ENCODE measurements at regions of chr12 and their contacts with region 1.

Region 1: GRCh38 chr12:132986001-132986912 is at the start of gene ZNF26:
- DNase-seq: peak; percentile 90
- H3K4me3 Mint-ChIP-seq: peak within 1 kb of the TSS; percentile 91
- H3K27ac Mint-ChIP-seq: peak within 1 kb of the TSS; percentile 90
- H3K4me1 Mint-ChIP-seq: peaks cover 31% of the 10 kb centered on the region
- H3K27me3 Mint-ChIP-seq: no peaks in the 10 kb centered on the region
- total RNA-seq, gene ZNF26: 15.2 to 15.5 TPM

Region 2: DNA sequence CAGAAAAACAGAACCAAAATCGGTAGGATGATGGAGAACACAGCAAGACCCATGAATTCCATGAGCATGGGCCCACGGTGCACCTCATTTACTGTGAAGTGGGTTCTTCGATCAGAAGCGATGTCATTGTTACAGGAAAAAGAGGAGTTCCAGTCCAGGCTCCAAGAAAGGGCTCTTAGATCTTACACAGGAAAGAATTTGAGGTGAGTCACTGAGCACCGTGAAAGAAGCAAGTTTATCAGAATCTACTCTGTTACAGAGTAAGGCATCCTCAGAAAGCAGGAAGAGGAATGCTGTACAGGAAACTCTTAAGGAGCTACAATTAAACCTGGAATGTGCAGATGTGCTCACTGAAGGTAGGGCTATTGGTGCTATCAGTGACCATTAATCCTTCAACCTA is 87.2 kb before region 1 on chr12:
- CTCF ChIA-PET with region 1: no interaction called
- POLR2A ChIA-PET with region 1: no interaction called
- DNase-seq: no peak
- H3K4me3 Mint-ChIP-seq: no peak overlapping the region
- H3K27ac Mint-ChIP-seq: no peak overlapping the region
- H3K4me1 Mint-ChIP-seq: no peaks in the 10 kb centered on the region
- H3K27me3 Mint-ChIP-seq: no peaks in the 10 kb centered on the region

Region 3: GRCh38 chr12:132956011-132956788 is 30.1 kb before region 1 on chr12 and contains the start of gene ZNF605:
- CTCF ChIA-PET with region 1: no interaction called
- POLR2A ChIA-PET with region 1: interaction called, 13 read pairs
- DNase-seq: peak; percentile 88
- H3K4me3 Mint-ChIP-seq: peak within 1 kb of the TSS; percentile 96
- H3K27ac Mint-ChIP-seq: peak within 1 kb of the TSS; percentile 92
- H3K4me1 Mint-ChIP-seq: peaks cover 19% of the 10 kb centered on the region
- H3K27me3 Mint-ChIP-seq: no peaks in the 10 kb centered on the region
- total RNA-seq, gene ZNF605: 7.2 to 7.9 TPM

Region 4: GRCh38 chr12:133037207-133038005 is 51.1 kb after region 1 on chr12 and contains the start of gene ZNF84:
- CTCF ChIA-PET with region 1: no interaction called
- POLR2A ChIA-PET with region 1: interaction called, 15 read pairs
- DNase-seq: peak; percentile 98
- H3K4me3 Mint-ChIP-seq: peak within 1 kb of the TSS; percentile 94
- H3K27ac Mint-ChIP-seq: peak within 1 kb of the TSS; percentile 97
- H3K4me1 Mint-ChIP-seq: peaks cover 14% of the 10 kb centered on the region
- H3K27me3 Mint-ChIP-seq: no peaks in the 10 kb centered on the region
- total RNA-seq, gene ZNF84: 17.4 to 17.5 TPM

Region 5: DNA sequence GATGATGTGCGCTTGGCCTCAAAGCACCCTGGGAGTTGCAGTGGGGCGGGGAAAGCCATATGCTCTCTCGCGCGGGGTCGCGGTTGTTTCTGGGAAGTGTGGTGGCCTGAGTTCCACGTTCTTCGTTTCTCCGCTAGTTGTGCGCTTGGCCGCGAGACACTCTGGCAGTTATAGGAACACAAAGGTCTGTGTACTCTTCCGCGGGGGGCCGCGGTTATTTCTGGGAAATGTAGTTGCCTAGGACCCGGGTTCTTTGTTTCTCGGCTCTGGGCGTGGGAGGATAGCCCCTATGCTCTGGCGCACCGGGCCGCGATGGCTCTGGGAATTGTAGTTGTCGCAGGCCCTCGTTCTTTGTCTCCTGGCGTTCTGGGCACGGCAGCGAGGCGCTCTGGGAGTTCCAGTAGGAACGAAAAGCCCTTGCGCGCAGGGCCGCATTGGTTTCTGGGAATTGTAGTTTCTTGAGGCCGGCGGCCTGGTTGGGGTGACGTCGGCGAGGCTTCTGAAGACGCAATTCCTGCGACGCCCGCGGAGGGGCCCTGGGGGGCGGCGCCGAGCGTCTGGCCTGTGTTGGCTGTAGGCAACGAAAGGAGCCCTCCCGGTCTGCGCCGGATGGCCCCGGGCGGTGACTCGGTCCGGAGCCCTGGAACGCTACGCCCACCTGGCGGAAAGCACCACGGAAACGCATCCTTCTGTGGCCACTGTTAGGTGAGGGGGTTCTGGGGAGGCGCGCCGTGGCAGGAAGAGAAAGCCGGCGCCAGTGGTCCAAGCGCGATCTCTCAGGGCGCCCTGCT is 94.3 kb after region 1 on chr12 and contains the start of gene ZNF140:
- CTCF ChIA-PET with region 1: interaction called, 4 read pairs
- POLR2A ChIA-PET with region 1: interaction called, 12 read pairs
- DNase-seq: peak; percentile 94
- H3K4me3 Mint-ChIP-seq: no peak within 1 kb of the TSS
- H3K27ac Mint-ChIP-seq: no peak within 1 kb of the TSS
- H3K4me1 Mint-ChIP-seq: peaks cover 13% of the 10 kb centered on the region
- H3K27me3 Mint-ChIP-seq: no peaks in the 10 kb centered on the region
- total RNA-seq, gene ZNF140: 15.8 to 18.8 TPM

Region 6: DNA sequence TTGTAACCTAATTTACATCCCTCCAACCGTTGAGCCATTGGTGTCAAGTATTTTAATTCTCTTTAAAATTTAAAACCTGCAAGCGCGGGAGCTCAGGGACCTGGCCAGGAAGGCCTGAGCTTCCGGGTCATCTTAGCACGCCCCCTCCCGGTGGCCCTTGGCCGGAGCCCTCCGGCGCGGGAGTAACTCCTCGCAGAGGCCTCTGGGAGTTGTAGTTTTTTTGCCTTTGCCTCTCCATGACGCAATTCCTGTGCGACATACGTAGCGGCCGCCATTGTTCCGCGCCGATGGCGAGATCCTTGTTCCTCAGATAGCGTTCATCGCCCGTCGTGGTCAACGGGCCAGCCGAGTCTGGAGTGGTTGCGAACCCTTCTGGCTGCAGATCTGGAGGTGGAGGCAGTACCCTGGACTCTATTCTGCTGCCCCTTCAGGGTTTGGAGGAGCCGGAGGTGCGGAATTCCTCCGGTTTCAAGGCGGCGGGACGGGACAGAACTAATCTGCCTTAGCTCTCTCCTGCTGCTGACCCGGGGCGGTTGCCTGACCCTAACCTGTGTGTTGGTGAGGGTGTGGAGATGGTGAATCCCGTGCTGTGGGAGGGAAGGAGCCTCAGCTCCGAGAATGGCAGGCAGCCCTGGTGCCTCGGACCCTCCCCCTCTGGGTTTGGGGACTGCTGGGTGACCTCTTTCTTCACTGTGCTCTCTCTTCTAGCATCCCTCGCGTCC is 195.1 kb after region 1 on chr12 and contains the start of gene ZNF268:
- CTCF ChIA-PET with region 1: interaction called, 11 read pairs
- POLR2A ChIA-PET with region 1: interaction called, 15 read pairs
- DNase-seq: peak; percentile 92
- H3K4me3 Mint-ChIP-seq: peak within 1 kb of the TSS; percentile 90
- H3K27ac Mint-ChIP-seq: peak within 1 kb of the TSS; percentile 83
- H3K4me1 Mint-ChIP-seq: peaks cover 18% of the 10 kb centered on the region
- H3K27me3 Mint-ChIP-seq: no peaks in the 10 kb centered on the region
- total RNA-seq, gene ZNF268: 15.8 to 18.4 TPM

Measured in activated CD4-positive, alpha-beta memory T cell treated with anti-CD3 and anti-CD28 coated beads, Interleukin-2, amount 10 ng/mL, durations not matched to agents 7 days and 5 days (primary cell).